ENCODE measurements at regions of chr4 and their contacts with region 1.

Region 1: DNA sequence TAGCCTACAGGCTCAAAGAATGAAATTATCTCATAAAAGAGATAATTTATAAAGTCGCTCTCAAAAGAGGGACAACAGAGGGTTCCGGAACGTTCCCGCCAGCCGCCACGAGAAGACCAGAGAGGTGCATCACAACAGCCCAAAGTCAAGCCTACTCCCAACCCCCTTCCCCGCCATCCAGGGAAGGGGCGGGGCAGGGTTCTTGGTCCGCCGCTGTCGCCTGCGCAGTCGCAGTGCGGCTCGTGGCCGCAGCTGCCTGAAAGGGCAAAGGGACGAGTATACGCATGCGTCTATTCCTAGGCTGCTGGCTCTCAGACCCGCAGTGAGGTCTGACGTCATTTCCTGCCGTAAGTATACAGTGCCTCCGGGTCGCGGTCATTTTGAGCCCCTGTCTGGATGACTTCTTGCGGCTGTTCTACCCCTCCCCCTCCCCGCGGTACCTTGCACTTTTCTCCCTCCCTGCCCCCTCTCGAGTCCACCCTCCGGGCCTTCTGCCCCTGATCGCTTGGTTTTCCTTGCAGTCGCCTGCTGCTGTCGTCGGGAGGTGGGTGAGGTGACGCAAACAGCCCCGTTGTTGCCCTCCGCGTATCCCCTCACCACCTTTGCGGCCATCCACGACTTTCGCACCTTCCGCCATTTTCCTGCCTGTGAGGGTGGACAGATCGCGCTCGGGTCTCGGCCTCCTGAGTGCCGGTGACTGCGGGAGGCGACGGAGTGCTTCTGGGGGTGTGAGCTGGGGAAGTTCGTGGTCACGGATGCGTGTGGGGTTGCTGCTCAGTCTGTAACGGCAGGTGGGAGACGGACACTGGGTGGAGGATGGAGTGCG is at the start of gene OCIAD1:
- DNase-seq: peak; percentile 82
- ATAC-seq: peak; percentile 94
- H3K4me3 Mint-ChIP-seq: peak within 1 kb of the TSS; percentile 100
- H3K27ac Mint-ChIP-seq: peak within 1 kb of the TSS; percentile 100
- H3K4me1 Mint-ChIP-seq: peaks cover 28% of the 10 kb centered on the region
- H3K27me3 Mint-ChIP-seq: no peaks in the 10 kb centered on the region
- CTCF ChIP-seq: no peak
- total RNA-seq, gene OCIAD1: 100 and 104 TPM in 2 replicates

Region 2: GRCh38 chr4:47914220-47914925 is 916.5 kb before region 1 on chr4 and contains the start of gene NFXL1:
- CTCF ChIA-PET with region 1: no interaction called
- POLR2A ChIA-PET with region 1: no interaction called
- intact Hi-C with region 1: loop called (anchors 1 kb)
- DNase-seq: peak; percentile 90
- ATAC-seq: peak; percentile 96
- H3K4me3 Mint-ChIP-seq: peak within 1 kb of the TSS; percentile 98
- H3K27ac Mint-ChIP-seq: peak within 1 kb of the TSS; percentile 92
- H3K4me1 Mint-ChIP-seq: peaks cover 31% of the 10 kb centered on the region
- H3K27me3 Mint-ChIP-seq: no peaks in the 10 kb centered on the region
- CTCF ChIP-seq: no peak
- total RNA-seq, gene NFXL1: 10.0 and 11.1 TPM in 2 replicates

Region 3: GRCh38 chr4:48578132-48578968 is 252.6 kb before region 1 on chr4:
- CTCF ChIA-PET with region 1: no interaction called
- POLR2A ChIA-PET with region 1: no interaction called
- intact Hi-C with region 1: loop called (anchors 1 kb)
- DNase-seq: no peak
- ATAC-seq: peak; percentile 83
- H3K4me3 Mint-ChIP-seq: no peak overlapping the region
- H3K27ac Mint-ChIP-seq: no peak overlapping the region
- H3K4me1 Mint-ChIP-seq: no peaks in the 10 kb centered on the region
- H3K27me3 Mint-ChIP-seq: no peaks in the 10 kb centered on the region
- CTCF ChIP-seq: peak; percentile 34

Region 4: DNA sequence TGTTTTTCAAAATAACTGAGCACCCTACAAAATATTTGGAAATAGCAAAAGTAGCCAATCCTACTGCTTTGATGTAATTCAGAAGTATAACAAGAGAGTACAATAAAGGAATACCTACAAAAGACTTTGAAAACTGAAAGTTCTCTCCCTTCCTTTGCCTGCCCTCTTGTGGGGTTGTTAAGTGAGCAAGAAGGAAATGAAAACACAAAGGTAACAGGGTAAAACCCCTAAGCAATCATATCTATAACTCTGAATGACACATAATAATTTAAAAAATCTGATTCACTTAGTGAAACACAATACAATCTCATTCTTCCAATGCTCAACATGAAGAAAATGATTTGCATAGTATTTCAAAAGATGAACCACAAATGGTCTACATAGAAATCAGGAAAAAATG is 149.1 kb before region 1 on chr4:
- CTCF ChIA-PET with region 1: no interaction called
- POLR2A ChIA-PET with region 1: no interaction called
- intact Hi-C with region 1: loop called (anchors 10 kb)
- DNase-seq: no peak
- ATAC-seq: peak; percentile 84
- H3K4me3 Mint-ChIP-seq: peak overlapping the region; percentile 24
- H3K27ac Mint-ChIP-seq: peak overlapping the region; percentile 78
- H3K4me1 Mint-ChIP-seq: peaks cover 44% of the 10 kb centered on the region
- H3K27me3 Mint-ChIP-seq: no peaks in the 10 kb centered on the region
- CTCF ChIP-seq: no peak

Region 5: DNA sequence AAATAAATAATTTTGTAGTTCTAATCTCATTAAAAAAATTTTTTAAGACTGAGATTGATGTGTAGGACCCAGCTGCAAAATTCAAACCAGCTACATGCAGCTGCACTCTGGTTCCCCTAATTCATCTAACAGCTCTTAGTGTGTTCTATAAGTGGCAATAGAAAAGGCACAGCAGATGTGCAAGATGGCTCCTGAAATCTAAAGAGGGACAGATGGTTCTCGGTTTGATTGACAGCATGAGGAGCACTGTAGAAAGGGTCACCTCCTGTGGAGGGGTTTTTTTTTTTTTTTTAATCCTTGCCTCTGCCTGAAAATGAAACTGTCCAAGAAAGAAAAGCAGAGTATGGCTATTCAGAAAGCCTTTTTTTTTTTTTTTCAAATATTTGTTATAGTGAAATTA is 17.0 kb before region 1 on chr4:
- CTCF ChIA-PET with region 1: no interaction called
- POLR2A ChIA-PET with region 1: interaction called, 15 read pairs
- intact Hi-C with region 1: no loop called
- DNase-seq: no peak
- ATAC-seq: no peak
- H3K4me3 Mint-ChIP-seq: no peak overlapping the region
- H3K27ac Mint-ChIP-seq: no peak overlapping the region
- H3K4me1 Mint-ChIP-seq: peaks cover 23% of the 10 kb centered on the region
- H3K27me3 Mint-ChIP-seq: no peaks in the 10 kb centered on the region
- CTCF ChIP-seq: no peak

Region 6: DNA sequence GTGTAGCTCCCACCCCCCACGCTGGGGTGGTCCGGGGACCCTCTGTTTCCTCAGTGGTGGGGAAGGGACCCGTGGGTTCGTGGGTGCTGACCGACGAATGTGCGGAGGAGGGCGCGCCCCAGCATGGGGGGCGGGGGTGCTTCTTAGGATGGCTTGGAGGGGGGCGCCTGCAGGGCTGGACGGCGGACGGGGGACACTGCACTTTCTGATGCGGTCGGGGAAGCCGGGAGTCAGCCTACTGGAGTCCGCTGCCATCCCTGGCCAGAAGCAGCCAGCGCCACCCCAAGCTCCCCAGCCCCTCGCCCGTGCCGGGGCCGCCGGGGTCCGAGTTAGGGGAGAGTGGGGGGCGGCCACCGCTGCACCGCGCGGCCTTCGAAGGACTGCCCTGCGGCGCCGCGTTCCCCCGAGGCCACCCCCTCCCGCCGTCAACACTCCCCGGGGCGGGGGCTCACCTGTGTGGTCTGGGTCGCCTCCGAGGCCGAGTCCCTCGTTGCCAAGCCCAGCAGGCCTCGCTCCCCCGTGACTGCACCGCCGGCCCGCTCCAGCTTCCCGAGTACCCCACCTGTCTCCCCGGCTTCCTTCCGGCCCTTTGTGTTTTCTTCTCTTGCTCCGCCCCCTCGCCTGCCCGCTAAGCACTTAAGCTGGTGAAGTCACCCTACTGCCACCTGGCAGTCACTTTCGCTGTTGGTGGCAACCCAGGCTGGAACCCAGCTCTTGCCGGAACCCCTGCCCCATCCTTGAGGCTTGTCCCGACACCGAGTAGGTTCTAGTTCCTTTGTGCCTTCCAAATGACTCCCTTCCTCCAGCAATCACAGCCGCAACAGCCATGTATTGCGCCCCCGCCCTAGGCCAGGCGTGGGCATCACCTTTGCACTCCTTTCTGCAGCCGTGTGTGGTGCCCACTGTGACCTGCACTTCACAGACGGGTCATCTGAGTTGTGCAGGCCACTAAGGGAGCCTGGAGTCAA is 75.6 kb after region 1 on chr4 and contains the start of gene OCIAD2:
- CTCF ChIA-PET with region 1: no interaction called
- POLR2A ChIA-PET with region 1: interaction called, 8 read pairs
- intact Hi-C with region 1: loop called (anchors 1 kb)
- DNase-seq: peak; percentile 65
- ATAC-seq: peak; percentile 97
- H3K4me3 Mint-ChIP-seq: peak within 1 kb of the TSS; percentile 97
- H3K27ac Mint-ChIP-seq: peak within 1 kb of the TSS; percentile 86
- H3K4me1 Mint-ChIP-seq: peaks cover 29% of the 10 kb centered on the region
- H3K27me3 Mint-ChIP-seq: no peaks in the 10 kb centered on the region
- CTCF ChIP-seq: no peak
- total RNA-seq, gene OCIAD2: 37.0 and 38.3 TPM in 2 replicates

Measured in activated B cell treated with CpG ODN at 0.5 μM for 24 hours (primary cell).